ENCODE measurements at regions of chr16 and their contacts with region 1.

Region 1: DNA sequence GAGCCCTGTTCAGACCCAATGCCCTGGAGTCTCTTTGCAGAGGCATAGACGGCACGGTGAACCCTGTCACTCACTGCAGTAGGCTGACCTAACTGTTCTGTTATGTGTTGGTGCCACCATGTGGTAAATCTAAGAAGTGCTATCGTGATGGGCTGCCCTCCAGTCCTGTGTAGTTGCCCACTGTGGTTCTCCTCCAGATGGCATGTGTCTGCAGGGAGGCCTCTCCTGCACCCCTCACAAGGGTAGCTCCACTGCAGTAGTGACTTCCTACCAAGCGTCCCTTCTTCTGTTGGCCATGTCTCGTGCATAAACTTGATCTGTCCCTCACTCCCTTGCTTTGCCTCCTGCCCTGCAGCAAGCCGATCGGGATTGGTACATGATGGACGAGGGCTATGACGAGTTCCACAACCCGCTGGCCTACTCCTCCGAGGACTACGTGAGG is 5.8 kb downstream of the DHX38 start:
- DNase-seq: peak; percentile 51
- H3K4me3 Mint-ChIP-seq: no peak overlapping the region
- H3K27ac Mint-ChIP-seq: no peak overlapping the region
- H3K4me1 Mint-ChIP-seq: peaks cover 17% of the 10 kb centered on the region
- H3K27me3 Mint-ChIP-seq: no peaks in the 10 kb centered on the region

Region 2: DNA sequence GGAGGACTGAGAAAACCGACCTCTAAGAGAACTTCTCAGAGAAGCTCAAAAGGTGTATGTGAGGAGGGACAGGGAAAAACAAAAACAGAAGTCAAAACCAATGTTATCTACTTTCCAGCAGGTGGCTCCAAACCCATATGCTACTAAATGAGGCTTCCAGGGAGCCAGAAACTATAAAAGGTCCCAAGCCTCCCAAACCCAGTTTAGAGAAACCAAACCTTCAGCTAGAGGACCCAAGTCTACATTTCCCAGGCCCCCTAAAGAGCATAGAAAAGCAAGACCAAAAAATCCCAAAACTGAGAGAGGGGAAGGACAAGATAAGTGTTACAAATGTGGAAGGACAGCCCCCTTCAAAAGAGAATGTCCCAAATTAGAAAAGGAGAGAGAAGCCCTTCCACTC is 32.7 kb before region 1 on chr16:
- CTCF ChIA-PET with region 1: interaction called, 4 read pairs
- POLR2A ChIA-PET with region 1: no interaction called
- intact Hi-C with region 1: loop called (anchors 1 kb)
- DNase-seq: no peak
- H3K4me3 Mint-ChIP-seq: no peak overlapping the region
- H3K27ac Mint-ChIP-seq: no peak overlapping the region
- H3K4me1 Mint-ChIP-seq: no peaks in the 10 kb centered on the region
- H3K27me3 Mint-ChIP-seq: no peaks in the 10 kb centered on the region